ENCODE measurements at regions of chr12 and their contacts with region 1.

Region 1: DNA sequence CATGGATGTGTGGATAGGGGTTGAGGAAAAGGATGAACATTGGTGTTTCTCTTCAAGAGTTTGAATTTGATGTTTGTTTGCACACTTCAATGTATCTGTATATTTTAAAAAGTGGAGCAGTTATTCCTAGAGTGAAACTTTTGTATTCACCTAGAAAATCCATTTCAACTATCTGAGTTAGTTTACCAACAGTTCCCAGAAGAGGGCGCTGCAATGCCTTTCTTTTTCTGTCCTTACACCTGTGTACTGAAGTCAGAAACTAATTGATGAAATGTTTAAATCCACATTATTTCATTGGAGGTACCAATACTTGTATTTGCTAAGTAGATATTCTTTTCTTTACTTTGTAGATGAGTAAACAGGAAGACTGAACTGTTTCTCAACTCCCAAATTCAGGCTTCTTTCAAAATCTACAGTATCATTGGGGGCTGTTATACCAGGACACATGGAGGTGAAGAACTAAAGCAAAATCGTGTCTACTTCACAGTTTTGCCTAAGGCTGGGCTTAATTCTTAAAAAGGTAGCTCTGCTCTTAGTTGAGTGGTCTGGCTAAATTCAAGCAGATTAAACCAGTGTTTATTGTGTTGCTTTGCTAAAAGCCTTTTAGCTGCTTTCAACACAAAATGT is 26.6 kb upstream of the KLRB1 start:
- DNase-seq: peak in 6 of 7 donors; percentile 43 to 83 (median 64)
- H3K4me3 ChIP-seq: no peak overlapping the region
- H3K27ac ChIP-seq: no peak overlapping the region
- H3K4me1 ChIP-seq: no peaks in the 10 kb centered on the region
- H3K27me3 ChIP-seq: no peaks in the 10 kb centered on the region
- CTCF ChIP-seq: peak; percentile 48 to 69 (median 66)
- POLR2A ChIP-seq: no peak

Region 2: DNA sequence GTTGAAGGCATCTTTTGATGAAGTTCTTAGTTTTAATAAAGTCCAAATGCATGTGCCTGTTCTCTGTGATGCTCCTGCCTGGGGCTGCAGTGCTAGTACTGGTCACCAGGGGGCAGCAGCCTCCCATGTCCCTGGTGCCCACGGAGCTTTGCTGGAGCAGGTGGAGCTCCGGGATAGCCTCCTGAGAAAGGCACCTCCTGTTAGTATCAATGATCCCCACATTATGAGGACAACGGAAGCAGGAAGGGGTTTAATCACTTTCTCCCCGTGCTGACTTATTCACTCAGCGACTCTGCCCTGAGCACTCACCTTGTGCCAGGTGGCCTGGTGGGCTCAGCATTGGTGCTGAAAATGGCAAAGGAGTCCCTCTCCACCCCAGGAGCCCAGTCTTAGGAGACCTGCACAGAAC is 303.1 kb before region 1 on chr12:
- intact Hi-C with region 1: loop called in 1 of 2 experiments (anchors 5 kb)
- DNase-seq: peak; percentile 56 to 87 (median 78)
- H3K4me3 ChIP-seq: no peak overlapping the region
- H3K27ac ChIP-seq: no peak overlapping the region
- H3K4me1 ChIP-seq: no peaks in the 10 kb centered on the region
- H3K27me3 ChIP-seq: no peaks in the 10 kb centered on the region
- CTCF ChIP-seq: peak; percentile 89 to 95 (median 93)
- POLR2A ChIP-seq: no peak

Region 3: GRCh38 chr12:9707864-9708808 is 73.8 kb after region 1 on chr12:
- intact Hi-C with region 1: loop called (anchors 5 kb)
- DNase-seq: peak; percentile 32 to 81 (median 52)
- H3K4me3 ChIP-seq: no peak overlapping the region
- H3K27ac ChIP-seq: no peak overlapping the region
- H3K4me1 ChIP-seq: no peaks in the 10 kb centered on the region
- H3K27me3 ChIP-seq: no peaks in the 10 kb centered on the region
- CTCF ChIP-seq: peak; percentile 58 to 79 (median 73)
- POLR2A ChIP-seq: no peak